Activated naive CD4-positive, alpha-beta T cell treated with anti-CD3 and anti-CD28 coated beads, Interleukin-2, amount 10 ng/mL, durations not matched to agents 7 days and 5 days (primary cell): ENCODE measurements at regions of chr22 and their contacts with region 1.

Region 1: DNA sequence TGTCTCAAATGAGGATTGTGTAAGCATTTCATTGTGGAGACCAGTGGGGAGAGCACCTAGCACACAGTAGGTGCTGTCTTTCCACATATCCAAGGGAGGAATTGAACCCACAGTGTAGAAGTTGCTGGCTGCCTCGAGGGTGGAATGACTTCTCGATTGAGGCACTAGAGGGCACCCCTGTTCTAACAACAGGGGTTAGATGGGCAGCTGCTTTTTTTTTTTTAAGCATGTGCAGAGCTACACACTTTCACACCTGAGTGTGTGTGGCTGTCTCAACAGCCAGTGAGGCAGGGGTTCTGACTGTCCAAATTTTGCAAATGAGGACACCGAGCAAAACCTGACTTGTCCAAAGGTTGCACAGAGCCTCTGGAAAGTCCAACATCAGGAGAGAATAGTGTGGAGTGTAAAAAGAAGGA is 118.2 kb upstream of the CRYBB3 start:
- DNase-seq: peak; percentile 74
- H3K4me3 Mint-ChIP-seq: no peak overlapping the region
- H3K27ac Mint-ChIP-seq: no peak overlapping the region
- H3K4me1 Mint-ChIP-seq: peaks cover 59% of the 10 kb centered on the region
- H3K27me3 Mint-ChIP-seq: no peaks in the 10 kb centered on the region

Region 2: DNA sequence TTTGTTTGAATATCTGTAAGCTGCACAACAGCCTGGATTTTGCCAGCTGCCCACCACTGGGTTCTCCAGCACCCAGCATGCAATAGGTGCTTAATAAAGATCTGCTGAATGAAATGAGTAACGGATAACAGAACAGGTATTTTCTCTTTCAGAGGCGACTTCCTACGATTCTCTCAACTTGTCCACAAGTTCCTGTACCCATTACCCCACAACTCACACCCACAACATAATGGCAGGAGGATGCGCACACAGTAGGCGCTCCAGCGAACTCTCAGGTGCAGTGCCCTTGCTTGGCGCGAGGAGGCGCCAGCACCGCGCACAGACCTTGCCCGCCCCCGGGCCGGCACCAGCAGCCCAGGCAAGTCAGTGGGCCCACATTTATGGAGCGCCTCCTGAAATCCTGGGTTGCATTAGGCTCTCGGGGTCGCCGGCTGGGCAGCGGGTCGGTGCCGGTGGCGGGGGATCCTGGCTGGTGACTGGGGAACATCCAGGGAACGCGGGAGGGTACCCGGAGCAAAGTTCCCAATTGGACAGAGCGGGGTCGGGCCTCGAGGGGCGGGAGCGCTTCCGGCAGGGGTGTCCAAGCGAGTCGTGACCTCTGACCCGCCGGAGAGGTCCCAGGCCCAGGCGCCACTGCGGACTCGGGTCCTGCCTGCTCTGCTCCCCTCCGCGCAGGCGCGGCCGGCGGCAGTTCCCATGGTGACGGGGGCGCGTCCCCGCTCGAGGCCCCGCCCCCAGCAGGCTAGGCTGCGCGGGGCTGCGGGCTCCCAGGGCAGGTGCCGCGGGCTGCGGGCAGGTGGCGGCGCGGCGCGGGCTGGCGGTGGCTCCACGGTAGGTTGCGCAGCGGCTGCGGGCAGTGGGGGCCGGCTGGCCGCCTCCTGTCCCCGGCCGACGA is 129.2 kb before region 1 on chr22 and contains the start of gene KIAA1671:
- CTCF ChIA-PET with region 1: no interaction called
- DNase-seq: peak; percentile 90
- H3K4me3 Mint-ChIP-seq: peak within 1 kb of the TSS; percentile 76
- H3K27ac Mint-ChIP-seq: peak within 1 kb of the TSS; percentile 47
- H3K4me1 Mint-ChIP-seq: peaks cover 33% of the 10 kb centered on the region
- H3K27me3 Mint-ChIP-seq: peaks cover 75% of the 10 kb centered on the region

Region 3: GRCh38 chr22:24969560-24970301 is 111.7 kb before region 1 on chr22:
- CTCF ChIA-PET with region 1: no interaction called
- DNase-seq: no peak
- H3K4me3 Mint-ChIP-seq: no peak overlapping the region
- H3K27ac Mint-ChIP-seq: no peak overlapping the region
- H3K4me1 Mint-ChIP-seq: no peaks in the 10 kb centered on the region
- H3K27me3 Mint-ChIP-seq: peaks cover 22% of the 10 kb centered on the region

Region 4: DNA sequence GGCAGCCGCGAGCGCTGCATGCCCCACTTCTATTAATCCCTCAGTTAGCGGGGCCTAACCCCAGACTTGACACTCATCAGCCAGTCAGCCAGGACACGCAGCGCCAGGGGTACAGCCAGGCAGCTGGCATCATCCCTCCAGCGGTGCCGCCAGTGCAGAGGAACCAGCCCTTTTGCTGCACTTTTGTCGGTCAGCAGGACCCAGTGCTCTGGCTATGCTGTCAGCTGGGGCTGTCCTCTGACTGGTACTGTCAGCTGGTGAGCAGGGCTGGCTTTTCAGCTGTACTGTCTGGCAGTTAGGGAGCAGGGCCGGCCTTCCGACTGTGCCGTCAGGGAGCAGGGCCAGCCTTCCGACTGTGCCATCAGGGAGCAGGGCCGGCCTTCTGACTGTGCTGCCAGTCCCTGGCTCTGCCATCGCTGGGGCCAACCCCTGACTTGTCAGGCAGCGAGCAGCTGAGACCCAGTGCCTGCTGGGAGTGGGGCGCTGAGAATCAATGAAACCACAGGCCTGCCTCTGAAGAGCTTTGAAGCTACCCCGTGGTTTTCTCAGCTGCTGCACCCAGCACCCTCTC is 13.5 kb before region 1 on chr22:
- CTCF ChIA-PET with region 1: interaction called, 16 read pairs
- DNase-seq: peak; percentile 95
- H3K4me3 Mint-ChIP-seq: peak overlapping the region; percentile 76
- H3K27ac Mint-ChIP-seq: peak overlapping the region; percentile 100
- H3K4me1 Mint-ChIP-seq: peaks cover 99% of the 10 kb centered on the region
- H3K27me3 Mint-ChIP-seq: no peaks in the 10 kb centered on the region

Region 5: DNA sequence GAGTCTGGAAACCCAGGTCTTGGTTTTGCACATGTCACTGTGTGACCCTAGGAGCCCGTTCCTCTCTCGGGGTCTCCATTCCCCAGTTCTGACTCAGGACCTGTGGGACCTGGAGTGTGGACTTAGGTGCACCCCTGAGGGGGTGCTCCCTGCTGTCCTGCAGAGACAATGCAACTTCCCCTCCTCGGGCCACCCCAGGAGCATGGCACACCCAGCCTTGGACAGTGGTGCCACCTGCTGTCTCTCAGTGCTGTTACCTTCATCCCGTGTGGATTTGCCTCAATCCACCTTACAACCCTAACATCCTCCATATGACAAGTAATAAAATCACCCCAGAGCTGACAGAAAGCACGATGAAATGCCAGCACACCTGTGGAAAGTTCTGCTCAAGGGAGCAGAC is 90.7 kb after region 1 on chr22:
- CTCF ChIA-PET with region 1: interaction called, 14 read pairs
- DNase-seq: peak; percentile 55
- H3K4me3 Mint-ChIP-seq: no peak overlapping the region
- H3K27ac Mint-ChIP-seq: no peak overlapping the region
- H3K4me1 Mint-ChIP-seq: no peaks in the 10 kb centered on the region
- H3K27me3 Mint-ChIP-seq: no peaks in the 10 kb centered on the region